ENCODE measurements at regions of chr7 and their contacts with region 1.

Region 1: GRCh38 chr7:38398725-38399321 is 125.4 kb upstream of the TARP start:
- DNase-seq: peak; percentile 79
- H3K4me3 Mint-ChIP-seq: no peak overlapping the region
- H3K27ac Mint-ChIP-seq: no peak overlapping the region
- H3K4me1 Mint-ChIP-seq: peaks cover 6% of the 10 kb centered on the region
- H3K27me3 Mint-ChIP-seq: peaks cover 20% of the 10 kb centered on the region

Region 2: GRCh38 chr7:38660427-38661099 is 261.7 kb after region 1 on chr7:
- intact Hi-C with region 1: loop called (anchors 1 kb)
- DNase-seq: peak; percentile 72
- H3K4me3 Mint-ChIP-seq: no peak overlapping the region
- H3K27ac Mint-ChIP-seq: no peak overlapping the region
- H3K4me1 Mint-ChIP-seq: no peaks in the 10 kb centered on the region
- H3K27me3 Mint-ChIP-seq: peaks cover 19% of the 10 kb centered on the region

Region 3: DNA sequence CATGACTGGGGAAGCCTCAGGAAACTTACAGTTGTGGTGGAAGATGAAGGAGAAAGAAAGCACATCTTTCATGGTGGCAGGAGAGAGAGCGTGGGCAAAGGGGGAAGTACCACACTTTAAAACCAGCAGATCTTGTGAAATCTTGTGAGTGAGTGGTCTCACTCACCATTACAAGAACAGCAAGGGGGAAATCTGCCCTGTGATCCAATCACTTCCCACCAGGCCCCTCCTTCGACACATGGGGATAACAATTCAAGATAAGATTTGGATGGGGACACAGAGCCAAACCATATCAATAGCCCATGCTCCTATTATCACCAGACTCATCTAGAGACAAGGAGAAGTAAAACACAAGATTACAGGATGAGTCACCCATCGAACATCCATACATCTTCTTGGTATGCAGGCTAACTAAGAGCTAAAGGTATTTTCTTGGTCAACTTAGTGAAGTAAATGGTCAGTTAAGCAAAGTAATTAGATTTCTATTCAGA is 1112.1 kb after region 1 on chr7:
- intact Hi-C with region 1: loop called (anchors 10 kb)
- DNase-seq: no peak
- H3K4me3 Mint-ChIP-seq: no peak overlapping the region
- H3K27ac Mint-ChIP-seq: peak overlapping the region; percentile 8
- H3K4me1 Mint-ChIP-seq: peaks cover 25% of the 10 kb centered on the region
- H3K27me3 Mint-ChIP-seq: peaks cover 8% of the 10 kb centered on the region